ENCODE measurements at regions of chr1 and their contacts with region 1.

Region 1: DNA sequence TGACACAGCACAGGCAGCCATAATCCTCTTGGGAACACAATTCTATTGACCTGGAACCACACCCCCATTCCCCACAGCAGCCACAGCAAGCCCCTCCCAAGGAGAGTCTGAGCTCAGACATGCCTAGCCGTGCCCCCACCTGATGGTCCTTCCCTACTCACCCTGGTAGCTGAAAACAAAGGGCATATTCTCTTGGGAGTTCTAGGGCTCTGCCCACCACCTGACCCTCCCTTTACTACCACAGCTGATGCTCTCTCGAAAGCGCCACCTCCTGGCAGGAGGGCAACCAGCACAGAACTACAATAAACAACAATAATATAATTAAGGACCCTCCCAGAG is 184.8 kb upstream of the COA6 start:
- DNase-seq: peak; percentile 74
- H3K4me3 Mint-ChIP-seq: no peak overlapping the region
- H3K27ac Mint-ChIP-seq: no peak overlapping the region
- H3K4me1 Mint-ChIP-seq: peaks cover 2% of the 10 kb centered on the region
- H3K27me3 Mint-ChIP-seq: peaks cover 49% of the 10 kb centered on the region

Region 2: DNA sequence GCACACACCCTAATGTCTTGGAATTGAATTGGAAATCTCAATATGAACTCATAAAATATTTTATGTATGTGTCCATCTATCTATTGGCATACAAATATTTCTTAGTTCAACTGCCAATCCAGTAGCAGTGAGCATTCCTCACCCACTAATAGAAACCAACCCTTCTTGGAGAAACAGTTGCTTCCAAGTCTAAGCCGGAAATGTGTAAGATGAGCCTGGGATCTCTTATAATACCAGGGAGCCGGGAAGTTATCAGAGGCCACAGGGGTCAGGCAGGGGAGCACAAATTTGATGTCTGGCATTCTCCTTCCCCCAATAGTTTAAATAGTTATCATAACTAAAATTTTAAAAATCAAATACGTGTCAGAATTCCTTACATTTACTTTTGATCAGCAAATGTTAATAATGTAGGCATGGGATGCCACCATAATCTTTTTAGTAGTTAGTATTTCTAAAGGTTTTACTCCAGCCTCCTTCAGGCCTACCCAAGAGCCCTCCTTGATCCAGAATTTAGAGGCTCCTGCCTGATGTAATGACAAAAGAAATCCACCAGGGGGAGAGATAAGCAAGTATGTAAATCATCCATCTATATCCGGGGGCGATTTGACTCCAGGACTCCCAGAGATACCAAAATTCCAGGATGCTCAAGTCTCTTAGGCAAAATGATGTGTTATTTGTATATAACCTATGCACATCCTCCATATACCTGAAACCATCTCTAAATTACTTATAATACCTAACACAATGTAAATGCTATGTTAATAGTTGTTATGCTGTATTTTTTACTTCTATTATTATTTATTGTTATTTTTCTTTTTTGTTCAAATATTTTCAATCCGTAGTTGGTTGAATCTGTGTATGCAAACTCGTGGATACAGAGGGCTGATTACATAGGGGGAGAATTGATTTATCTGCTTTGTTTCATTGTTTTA is 33.8 kb before region 1 on chr1:
- intact Hi-C with region 1: loop called (anchors 1 kb)
- DNase-seq: peak; percentile 77
- H3K4me3 Mint-ChIP-seq: no peak overlapping the region
- H3K27ac Mint-ChIP-seq: no peak overlapping the region
- H3K4me1 Mint-ChIP-seq: no peaks in the 10 kb centered on the region
- H3K27me3 Mint-ChIP-seq: peaks cover 21% of the 10 kb centered on the region

Region 3: DNA sequence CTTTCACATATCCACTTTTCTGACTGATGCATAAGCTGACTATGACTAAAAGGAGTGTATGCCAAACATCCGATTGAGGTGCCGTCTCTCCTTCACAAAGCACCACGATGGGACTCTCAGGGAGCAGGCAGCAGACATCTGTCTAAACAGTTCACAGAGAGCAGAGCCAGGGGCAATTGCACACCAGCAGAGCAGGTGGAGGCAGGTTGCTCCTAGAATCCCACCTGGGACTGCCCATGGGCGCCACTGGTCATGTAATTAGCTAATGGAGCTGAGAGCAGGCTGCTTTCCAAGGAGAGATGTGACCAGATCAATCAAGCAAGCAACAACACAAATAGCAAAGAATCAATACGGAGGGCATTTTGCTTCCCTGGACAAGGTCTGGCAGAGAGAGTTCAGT is 154.4 kb after region 1 on chr1:
- intact Hi-C with region 1: no loop called
- DNase-seq: peak; percentile 53
- H3K4me3 Mint-ChIP-seq: no peak overlapping the region
- H3K27ac Mint-ChIP-seq: no peak overlapping the region
- H3K4me1 Mint-ChIP-seq: no peaks in the 10 kb centered on the region
- H3K27me3 Mint-ChIP-seq: peaks cover 28% of the 10 kb centered on the region

Measured in activated CD4-positive, alpha-beta T cell treated with anti-CD3 and anti-CD28 coated beads, Interleukin-2, amount 10 ng/mL, durations not matched to agents 24 days and 14 days (primary cell).